Head of caudate nucleus (tissue), 42 donors: ENCODE measurements at regions of chr10 and their contacts with region 1.

Region 1: GRCh38 chr10:67764012-67764822 is 68.2 kb upstream of the CTNNA3 start:
- DNase-seq: peak; percentile 86 to 98 (median 94)

Region 2: GRCh38 chr10:67666416-67667034 is 97.7 kb before region 1 on chr10:
- intact Hi-C with region 1: loop called (anchors 5 kb)
- DNase-seq: no peak

Region 3: DNA sequence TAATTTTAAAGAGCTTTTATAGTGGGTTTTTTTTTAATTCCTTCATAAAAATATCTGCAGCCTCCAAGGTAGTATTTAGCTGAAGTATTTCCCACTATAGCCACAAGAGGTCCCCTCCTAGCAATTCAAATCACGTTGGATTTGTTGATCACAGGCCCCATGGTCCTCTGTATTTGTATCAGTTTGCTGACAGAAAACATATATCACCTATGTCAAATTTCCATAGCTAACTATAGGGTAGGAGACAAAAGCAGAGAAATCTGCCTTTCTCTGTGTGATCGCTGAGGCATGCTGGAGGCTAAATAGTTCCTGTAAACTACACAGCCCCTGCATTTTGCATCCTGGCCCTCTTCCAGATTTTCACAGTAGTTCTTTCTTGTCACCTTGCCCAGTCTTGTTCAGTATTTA is 66.5 kb before region 1 on chr10:
- intact Hi-C with region 1: loop called (anchors 5 kb)
- DNase-seq: peak in 24 of 42 donors; percentile 9 to 69 (median 22)

Region 4: GRCh38 chr10:67849331-67850011 is 85.3 kb after region 1 on chr10:
- intact Hi-C with region 1: no loop called
- DNase-seq: peak; percentile 89 to 99 (median 97)

Region 5: DNA sequence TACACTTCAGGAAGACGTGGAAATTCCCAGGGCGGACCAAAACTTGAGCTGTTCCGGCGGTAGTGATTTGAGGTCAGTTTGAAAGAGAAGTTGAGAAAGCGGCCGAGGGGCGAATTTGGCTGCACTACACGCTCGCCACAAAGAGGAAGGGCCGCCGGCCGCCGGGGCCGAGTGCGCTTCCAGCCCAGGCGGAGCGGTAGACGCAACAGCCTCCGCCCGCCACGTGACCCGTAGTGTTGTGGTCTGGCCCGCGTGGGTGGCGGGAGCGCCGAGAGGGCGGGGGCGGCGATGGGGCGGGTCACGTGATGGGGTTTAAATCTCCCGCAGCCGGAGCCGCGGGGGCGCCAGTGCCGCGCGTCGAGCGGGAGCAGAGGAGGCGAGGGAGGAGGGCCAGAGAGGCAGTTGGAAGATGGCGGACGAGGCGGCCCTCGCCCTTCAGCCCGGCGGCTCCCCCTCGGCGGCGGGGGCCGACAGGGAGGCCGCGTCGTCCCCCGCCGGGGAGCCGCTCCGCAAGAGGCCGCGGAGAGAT is 120.2 kb after region 1 on chr10 and contains the start of gene SIRT1:
- intact Hi-C with region 1: no loop called
- DNase-seq: peak; percentile 93 to 99 (median 97)